CD4-positive, alpha-beta T cell (primary cell): ENCODE measurements at regions of chr6 and their contacts with region 1.

Region 1: GRCh38 chr6:31197559-31198305 is 27.2 kb upstream of the POU5F1 start:
- DNase-seq: peak; percentile 91 to 98 (median 92)
- ATAC-seq: peak; percentile 76
- H3K4me3 ChIP-seq: peak overlapping the region; percentile 71
- H3K4me3 Mint-ChIP-seq: peak overlapping the region; percentile 97
- H3K27ac ChIP-seq: peak overlapping the region; percentile 97 to 100
- H3K27ac Mint-ChIP-seq: peak overlapping the region; percentile 93
- H3K4me1 ChIP-seq: peaks cover 60% of the 10 kb centered on the region
- H3K4me1 Mint-ChIP-seq: peaks cover 65% of the 10 kb centered on the region
- H3K27me3 ChIP-seq: no peaks in the 10 kb centered on the region
- H3K27me3 Mint-ChIP-seq: no peaks in the 10 kb centered on the region
- CTCF ChIP-seq: no peak

Region 2: GRCh38 chr6:31143148-31143547 is 54.6 kb before region 1 on chr6:
- CTCF ChIA-PET with region 1: interaction called, 12 read pairs
- POLR2A ChIA-PET with region 1: interaction called, 6 read pairs
- intact Hi-C with region 1: no loop called
- DNase-seq: no peak
- ATAC-seq: no peak
- H3K4me3 ChIP-seq: no peak overlapping the region
- H3K4me3 Mint-ChIP-seq: no peak overlapping the region
- H3K27ac ChIP-seq: no peak overlapping the region
- H3K27ac Mint-ChIP-seq: no peak overlapping the region
- H3K4me1 ChIP-seq: no peaks in the 10 kb centered on the region
- H3K4me1 Mint-ChIP-seq: no peaks in the 10 kb centered on the region
- H3K27me3 ChIP-seq: no peaks in the 10 kb centered on the region
- H3K27me3 Mint-ChIP-seq: no peaks in the 10 kb centered on the region
- CTCF ChIP-seq: no peak

Region 3: GRCh38 chr6:31246050-31246521 is 48.4 kb after region 1 on chr6:
- CTCF ChIA-PET with region 1: interaction called, 4 read pairs
- POLR2A ChIA-PET with region 1: interaction called, 12 read pairs
- intact Hi-C with region 1: no loop called
- DNase-seq: no peak
- ATAC-seq: no peak
- H3K4me3 ChIP-seq: no peak overlapping the region
- H3K4me3 Mint-ChIP-seq: no peak overlapping the region
- H3K27ac ChIP-seq: no peak overlapping the region
- H3K27ac Mint-ChIP-seq: no peak overlapping the region
- H3K4me1 ChIP-seq: no peaks in the 10 kb centered on the region
- H3K4me1 Mint-ChIP-seq: peaks cover 13% of the 10 kb centered on the region
- H3K27me3 ChIP-seq: peaks cover 0 to 6% of the 10 kb centered on the region in 2 experiments
- H3K27me3 Mint-ChIP-seq: peaks cover 34% of the 10 kb centered on the region
- CTCF ChIP-seq: no peak

Region 4: GRCh38 chr6:31285486-31285885 is 87.8 kb after region 1 on chr6:
- CTCF ChIA-PET with region 1: interaction called, 5 read pairs
- POLR2A ChIA-PET with region 1: interaction called, 18 read pairs
- intact Hi-C with region 1: no loop called
- DNase-seq: no peak
- ATAC-seq: no peak
- H3K4me3 ChIP-seq: no peak overlapping the region
- H3K4me3 Mint-ChIP-seq: no peak overlapping the region
- H3K27ac ChIP-seq: no peak overlapping the region
- H3K27ac Mint-ChIP-seq: no peak overlapping the region
- H3K4me1 ChIP-seq: no peaks in the 10 kb centered on the region
- H3K4me1 Mint-ChIP-seq: no peaks in the 10 kb centered on the region
- H3K27me3 ChIP-seq: no peaks in the 10 kb centered on the region
- H3K27me3 Mint-ChIP-seq: peaks cover 4% of the 10 kb centered on the region
- CTCF ChIP-seq: no peak

Region 5: DNA sequence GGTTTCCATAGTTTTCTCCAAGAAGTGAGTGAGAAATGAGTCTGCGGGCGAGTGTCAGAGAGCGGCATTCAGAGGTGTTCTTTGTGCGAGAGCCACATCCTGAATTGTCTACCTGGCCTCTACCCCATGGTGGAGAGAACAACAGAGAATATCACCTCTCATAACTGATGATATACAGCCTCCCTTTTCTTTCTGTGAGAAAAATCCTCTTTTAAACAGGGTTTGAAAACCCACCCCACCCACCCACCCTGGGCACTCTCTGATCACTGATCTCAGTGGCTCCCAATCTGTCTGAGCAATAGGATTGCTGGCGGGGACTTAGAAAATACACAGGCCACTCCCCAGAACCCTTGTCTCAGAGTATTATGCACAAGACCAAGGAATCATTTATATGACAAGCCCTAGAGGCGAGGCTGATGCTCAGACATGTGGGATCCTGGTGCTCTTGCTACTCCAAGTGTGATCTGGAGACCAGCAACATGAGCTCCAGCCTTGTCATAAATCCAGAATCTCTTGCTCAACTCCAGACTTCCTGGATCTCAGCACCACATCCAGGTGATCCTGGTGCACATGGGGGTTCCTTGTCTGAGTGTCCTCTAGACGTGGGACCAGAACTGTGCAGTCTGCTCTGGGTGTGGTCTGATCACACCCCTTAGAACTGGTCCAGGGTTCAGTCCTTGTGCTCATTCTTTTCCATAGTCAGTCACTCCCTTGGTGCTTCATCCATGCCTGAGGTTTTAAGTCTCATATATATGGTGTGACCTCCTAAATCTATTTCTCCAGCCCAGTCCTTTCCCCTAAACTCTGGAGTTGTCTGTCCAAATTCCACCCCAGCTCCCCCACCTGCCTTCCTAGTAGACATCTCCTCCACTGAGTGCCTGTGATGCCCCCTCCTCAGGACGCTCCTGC is 153.9 kb after region 1 on chr6:
- CTCF ChIA-PET with region 1: interaction called, 7 read pairs
- POLR2A ChIA-PET with region 1: interaction called, 52 read pairs
- intact Hi-C with region 1: loop called in 1 of 2 experiments (anchors 2 kb)
- DNase-seq: peak in 6 of 14 experiments; percentile 12 to 78 (median 43)
- ATAC-seq: peak; percentile 43
- H3K4me3 ChIP-seq: no peak overlapping the region
- H3K4me3 Mint-ChIP-seq: peak overlapping the region; percentile 68
- H3K27ac ChIP-seq: peak overlapping the region in 1 of 2 donors; percentile 4
- H3K27ac Mint-ChIP-seq: peak overlapping the region; percentile 100
- H3K4me1 ChIP-seq: peaks cover 48% of the 10 kb centered on the region
- H3K4me1 Mint-ChIP-seq: peaks cover 58% of the 10 kb centered on the region
- H3K27me3 ChIP-seq: no peaks in the 10 kb centered on the region
- H3K27me3 Mint-ChIP-seq: peaks cover 5% of the 10 kb centered on the region
- CTCF ChIP-seq: no peak

Region 6: GRCh38 chr6:31403283-31403989 is 205.7 kb after region 1 on chr6 and contains the start of gene MICA:
- CTCF ChIA-PET with region 1: interaction called, 3 read pairs
- POLR2A ChIA-PET with region 1: interaction called, 15 read pairs
- intact Hi-C with region 1: no loop called
- DNase-seq: peak; percentile 25 to 82 (median 54)
- ATAC-seq: peak; percentile 38
- H3K4me3 ChIP-seq: peak within 1 kb of the TSS; percentile 76
- H3K4me3 Mint-ChIP-seq: peak within 1 kb of the TSS; percentile 92
- H3K27ac ChIP-seq: peak within 1 kb of the TSS; percentile 33 to 50
- H3K27ac Mint-ChIP-seq: peak within 1 kb of the TSS; percentile 81
- H3K4me1 ChIP-seq: peaks cover 51% of the 10 kb centered on the region
- H3K4me1 Mint-ChIP-seq: peaks cover 75% of the 10 kb centered on the region
- H3K27me3 ChIP-seq: no peaks in the 10 kb centered on the region
- H3K27me3 Mint-ChIP-seq: no peaks in the 10 kb centered on the region
- CTCF ChIP-seq: no peak
- total RNA-seq, gene MICA: 10.6 to 14.0 TPM

Region 7: GRCh38 chr6:31485055-31485454 is 287.3 kb after region 1 on chr6:
- CTCF ChIA-PET with region 1: no interaction called
- POLR2A ChIA-PET with region 1: no interaction called
- intact Hi-C with region 1: no loop called
- DNase-seq: no peak
- ATAC-seq: no peak
- H3K4me3 ChIP-seq: no peak overlapping the region
- H3K4me3 Mint-ChIP-seq: no peak overlapping the region
- H3K27ac ChIP-seq: no peak overlapping the region
- H3K27ac Mint-ChIP-seq: no peak overlapping the region
- H3K4me1 ChIP-seq: no peaks in the 10 kb centered on the region
- H3K4me1 Mint-ChIP-seq: no peaks in the 10 kb centered on the region
- H3K27me3 ChIP-seq: no peaks in the 10 kb centered on the region
- H3K27me3 Mint-ChIP-seq: no peaks in the 10 kb centered on the region
- CTCF ChIP-seq: no peak

Region 8: GRCh38 chr6:31827286-31828079 is 629.8 kb after region 1 on chr6 and contains the start of gene HSPA1B:
- CTCF ChIA-PET with region 1: no interaction called
- POLR2A ChIA-PET with region 1: no interaction called
- intact Hi-C with region 1: no loop called
- DNase-seq: peak; percentile 64 to 93 (median 84)
- ATAC-seq: peak; percentile 66
- H3K4me3 ChIP-seq: peak within 1 kb of the TSS; percentile 84
- H3K4me3 Mint-ChIP-seq: peak within 1 kb of the TSS; percentile 96
- H3K27ac ChIP-seq: peak within 1 kb of the TSS; percentile 74 to 76
- H3K27ac Mint-ChIP-seq: peak within 1 kb of the TSS; percentile 97
- H3K4me1 ChIP-seq: peaks cover 43% of the 10 kb centered on the region
- H3K4me1 Mint-ChIP-seq: peaks cover 43% of the 10 kb centered on the region
- H3K27me3 ChIP-seq: no peaks in the 10 kb centered on the region
- H3K27me3 Mint-ChIP-seq: no peaks in the 10 kb centered on the region
- CTCF ChIP-seq: no peak
- total RNA-seq, gene HSPA1B: 8.3 to 9.8 TPM